Activated T-helper 1 cell treated with anti-CD3 and anti-CD28 coated beads, Interleukin-12 subunit alpha, Interleukin-12 subunit beta, Interleukin-2, Interleukin-4 antibody, amounts not matched to agents 30 ng/mL and 10 ng/mL and 1 ng/mL, durations not matched to agents 14 hours and 24 hours and 36 hours (primary cell): ENCODE measurements at regions of chr11 and their contacts with region 1.

Region 1: DNA sequence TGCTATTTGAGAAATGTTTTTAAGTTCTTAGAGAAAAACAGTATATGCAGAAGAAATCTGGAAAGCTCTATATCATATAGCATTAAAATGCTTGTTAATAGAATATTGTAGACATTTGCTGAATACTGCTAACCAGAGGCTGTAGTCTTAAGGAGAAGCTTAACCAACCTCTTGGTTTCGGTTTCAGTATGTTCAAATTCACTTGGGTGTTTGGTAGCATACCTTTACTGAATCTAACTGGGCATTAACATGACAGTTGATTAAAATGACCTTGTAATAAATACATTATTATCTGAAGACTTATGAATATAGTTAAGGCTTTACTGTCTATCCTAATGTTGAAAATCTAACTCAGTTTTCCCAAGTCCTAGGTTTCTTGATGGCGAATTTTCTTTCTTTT is 5.4 kb downstream of the PCF11 start:
- DNase-seq: no peak
- H3K4me3 Mint-ChIP-seq: peak overlapping the region; percentile 50
- H3K27ac Mint-ChIP-seq: no peak overlapping the region
- H3K4me1 Mint-ChIP-seq: peaks cover 55% of the 10 kb centered on the region
- H3K27me3 Mint-ChIP-seq: no peaks in the 10 kb centered on the region

Region 2: GRCh38 chr11:82906244-82906654 is 256.1 kb before region 1 on chr11:
- intact Hi-C with region 1: loop called (anchors 1 kb)
- DNase-seq: no peak
- H3K4me3 Mint-ChIP-seq: no peak overlapping the region
- H3K27ac Mint-ChIP-seq: no peak overlapping the region
- H3K4me1 Mint-ChIP-seq: peaks cover 56% of the 10 kb centered on the region
- H3K27me3 Mint-ChIP-seq: no peaks in the 10 kb centered on the region

Region 3: GRCh38 chr11:82949352-82949751 is 213.0 kb before region 1 on chr11:
- intact Hi-C with region 1: no loop called
- DNase-seq: no peak
- H3K4me3 Mint-ChIP-seq: no peak overlapping the region
- H3K27ac Mint-ChIP-seq: no peak overlapping the region
- H3K4me1 Mint-ChIP-seq: no peaks in the 10 kb centered on the region
- H3K27me3 Mint-ChIP-seq: peaks cover 10% of the 10 kb centered on the region

Region 4: DNA sequence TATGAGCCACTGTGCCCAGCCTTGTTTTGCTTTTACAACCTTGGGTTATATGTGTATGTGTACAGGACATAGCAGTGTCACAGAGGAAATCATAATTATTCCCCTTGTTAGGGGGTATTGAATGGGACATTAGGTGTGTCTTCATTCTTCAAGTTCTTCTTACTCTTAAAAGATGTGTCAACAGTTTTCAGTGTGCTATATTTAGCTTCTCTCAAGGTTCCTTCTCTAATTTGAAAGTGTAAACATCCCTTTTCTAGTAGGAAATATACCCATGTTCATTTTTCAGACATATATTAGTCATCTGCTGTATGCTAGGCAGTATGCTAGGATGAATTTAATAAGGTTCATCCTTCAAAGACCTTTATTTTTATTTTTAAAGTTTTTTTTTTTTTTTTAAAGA is 11.6 kb after region 1 on chr11:
- intact Hi-C with region 1: loop called (anchors 1 kb)
- DNase-seq: no peak
- H3K4me3 Mint-ChIP-seq: no peak overlapping the region
- H3K27ac Mint-ChIP-seq: no peak overlapping the region
- H3K4me1 Mint-ChIP-seq: peaks cover 63% of the 10 kb centered on the region
- H3K27me3 Mint-ChIP-seq: no peaks in the 10 kb centered on the region